ENCODE measurements at regions of chr10 and their contacts with region 1.

Region 1: GRCh38 chr10:97210543-97210961 is 24.8 kb upstream of the SLIT1 start:
- DNase-seq: peak; percentile 37
- ATAC-seq: peak; percentile 91
- H3K4me3 ChIP-seq: no peak overlapping the region
- H3K27ac ChIP-seq: no peak overlapping the region
- H3K4me1 ChIP-seq: peaks cover 3% of the 10 kb centered on the region
- H3K27me3 ChIP-seq: no peaks in the 10 kb centered on the region
- CTCF ChIP-seq: peak; percentile 88 to 94 (median 92)
- EP300 ChIP-seq: no peak
- POLR2A ChIP-seq: no peak
- RAD21 ChIP-seq: peak; percentile 94

Region 2: DNA sequence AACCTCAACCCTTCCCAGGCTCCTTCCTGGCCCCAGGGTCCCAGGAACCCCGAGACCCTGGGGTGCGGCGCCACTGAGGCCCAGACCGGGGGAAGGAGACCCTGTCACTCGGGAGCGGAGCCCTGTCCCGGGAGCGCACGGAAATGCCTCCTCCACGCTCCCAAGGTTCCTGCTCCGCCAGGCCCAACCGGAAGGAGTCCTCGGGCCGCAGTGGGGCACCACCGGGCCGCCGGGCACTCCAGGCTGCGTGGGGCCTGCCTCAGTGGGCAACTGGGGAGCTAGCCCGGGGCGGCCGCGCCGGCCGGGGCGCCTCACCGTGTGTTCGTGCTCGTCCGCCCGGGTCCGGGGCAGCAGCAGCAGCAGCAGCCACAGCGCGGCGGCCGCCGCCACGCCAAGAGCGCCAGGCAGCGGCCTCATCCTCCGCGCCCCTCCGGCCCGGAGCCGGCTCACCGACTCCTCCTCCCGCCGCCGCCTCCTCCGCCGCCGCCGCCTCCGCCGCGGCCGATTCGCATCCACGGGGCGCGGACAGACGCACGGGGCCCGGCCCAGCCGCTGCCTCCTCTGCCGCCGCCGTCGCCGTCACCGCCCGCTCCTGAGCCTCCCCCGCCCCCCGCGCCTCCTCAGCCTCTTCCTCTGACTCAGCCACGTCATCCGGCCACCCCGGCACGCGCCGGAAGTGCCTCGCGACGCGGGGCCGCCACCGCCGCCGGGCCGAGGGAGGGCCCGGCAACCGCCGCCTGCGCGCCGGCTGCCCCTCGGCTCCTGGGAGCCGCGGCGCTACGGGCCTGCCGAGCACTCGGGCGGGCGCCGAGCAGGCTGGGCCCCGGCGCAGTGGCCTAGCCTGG is 623.9 kb before region 1 on chr10 and contains the start of gene TM9SF3:
- CTCF ChIA-PET with region 1: no interaction called
- POLR2A ChIA-PET with region 1: no interaction called
- RAD21 ChIA-PET with region 1: no interaction called
- SMC1A ChIA-PET with region 1: no interaction called
- in situ Hi-C with region 1: no loop called
- intact Hi-C with region 1: no loop called
- DNase-seq: no peak
- ATAC-seq: peak; percentile 66
- H3K4me3 ChIP-seq: peak within 1 kb of the TSS; percentile 85
- H3K27ac ChIP-seq: peak within 1 kb of the TSS; percentile 96
- H3K4me1 ChIP-seq: peaks cover 22% of the 10 kb centered on the region
- H3K27me3 ChIP-seq: no peaks in the 10 kb centered on the region
- CTCF ChIP-seq: no peak
- EP300 ChIP-seq: no peak
- POLR2A ChIP-seq: peak; percentile 90
- RAD21 ChIP-seq: no peak
- polyA plus RNA-seq, gene TM9SF3: 17.1 to 20.4 TPM

Region 3: DNA sequence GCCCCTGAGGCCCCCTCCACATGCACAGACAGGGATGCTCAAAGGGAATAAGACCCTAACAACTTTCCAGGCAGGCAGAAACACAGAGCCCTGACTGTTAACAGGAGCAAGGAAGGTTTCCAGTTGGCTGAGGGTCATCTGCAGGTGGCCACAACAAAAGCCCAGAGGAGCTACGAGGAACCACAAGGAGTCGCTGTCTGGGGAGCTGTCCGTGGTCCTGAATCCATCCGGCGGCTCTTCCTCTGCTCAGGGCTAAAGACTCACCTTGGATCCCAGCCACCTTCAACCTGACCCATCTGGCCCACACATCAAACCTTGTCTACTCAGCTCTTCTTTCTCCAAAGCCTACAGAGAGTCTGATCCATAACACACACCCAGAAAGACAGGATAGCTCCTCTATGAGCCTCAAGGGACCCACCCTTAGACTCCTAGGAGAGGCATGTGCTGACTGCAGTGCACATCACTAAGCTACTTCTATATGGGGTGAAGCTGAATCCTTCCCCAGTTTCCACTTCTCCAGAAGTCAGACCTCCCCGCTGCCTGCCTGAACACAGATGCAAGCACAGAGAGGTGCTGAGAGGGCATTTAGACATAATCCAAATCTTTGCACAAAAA is 128.8 kb before region 1 on chr10:
- CTCF ChIA-PET with region 1: interaction called, 651 read pairs
- POLR2A ChIA-PET with region 1: no interaction called
- RAD21 ChIA-PET with region 1: interaction called, 12 read pairs
- SMC1A ChIA-PET with region 1: interaction called, 18 read pairs
- in situ Hi-C with region 1: no loop called
- intact Hi-C with region 1: loop called (anchors 2 kb)
- DNase-seq: no peak
- ATAC-seq: peak; percentile 93
- H3K4me3 ChIP-seq: no peak overlapping the region
- H3K27ac ChIP-seq: no peak overlapping the region
- H3K4me1 ChIP-seq: no peaks in the 10 kb centered on the region
- H3K27me3 ChIP-seq: no peaks in the 10 kb centered on the region; a peak in 1 of 4 replicates
- CTCF ChIP-seq: peak; percentile 88 to 90 (median 90)
- EP300 ChIP-seq: no peak
- POLR2A ChIP-seq: no peak
- RAD21 ChIP-seq: peak; percentile 68

Region 4: GRCh38 chr10:97138174-97138573 is 72.4 kb before region 1 on chr10:
- CTCF ChIA-PET with region 1: interaction called, 14 read pairs
- POLR2A ChIA-PET with region 1: no interaction called
- RAD21 ChIA-PET with region 1: interaction called, 3 read pairs
- SMC1A ChIA-PET with region 1: interaction called, 5 read pairs
- in situ Hi-C with region 1: no loop called
- intact Hi-C with region 1: no loop called
- DNase-seq: no peak
- ATAC-seq: 0 out of 3 replicates have a peak, but pooled peaks have one; percentile 20
- H3K4me3 ChIP-seq: no peak overlapping the region
- H3K27ac ChIP-seq: no peak overlapping the region
- H3K4me1 ChIP-seq: no peaks in the 10 kb centered on the region
- H3K27me3 ChIP-seq: peaks cover 0 to 5% of the 10 kb centered on the region in 2 experiments; a peak in 2 of 4 replicates
- CTCF ChIP-seq: peak; percentile 19 to 46 (median 24); a peak in 4 of 6 replicates
- EP300 ChIP-seq: no peak
- POLR2A ChIP-seq: no peak
- RAD21 ChIP-seq: no peak

Region 5: GRCh38 chr10:97196223-97197029 is 14.1 kb before region 1 on chr10:
- CTCF ChIA-PET with region 1: interaction called, 178 read pairs
- POLR2A ChIA-PET with region 1: no interaction called
- RAD21 ChIA-PET with region 1: interaction called, 7 read pairs
- SMC1A ChIA-PET with region 1: interaction called, 21 read pairs
- in situ Hi-C with region 1: no loop called
- intact Hi-C with region 1: no loop called
- DNase-seq: no peak
- ATAC-seq: peak; percentile 91
- H3K4me3 ChIP-seq: peak overlapping the region; percentile 79
- H3K27ac ChIP-seq: no peak overlapping the region
- H3K4me1 ChIP-seq: peaks cover 14% of the 10 kb centered on the region
- H3K27me3 ChIP-seq: no peaks in the 10 kb centered on the region; a peak in 1 of 4 replicates
- CTCF ChIP-seq: peak; percentile 76 to 94 (median 81)
- EP300 ChIP-seq: no peak
- POLR2A ChIP-seq: no peak
- RAD21 ChIP-seq: peak; percentile 63

Region 6: DNA sequence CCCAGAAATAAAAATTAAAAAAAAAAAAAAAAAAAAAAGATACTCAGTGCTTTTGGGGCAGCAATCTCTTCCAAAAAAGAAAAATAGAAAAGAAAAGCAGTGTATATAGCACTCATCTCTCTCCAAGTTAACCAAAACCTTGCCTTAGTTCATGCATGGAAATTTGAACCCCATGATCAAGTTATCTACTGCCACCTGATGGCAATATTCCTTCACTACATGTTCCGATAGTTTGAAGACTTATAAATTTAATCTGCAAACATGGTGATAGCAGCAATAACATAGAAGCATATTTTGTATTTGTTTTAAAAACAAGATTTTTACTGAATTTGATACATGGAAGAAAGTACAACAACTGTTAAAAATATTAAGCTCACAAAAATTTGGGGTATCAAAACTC is 23.8 kb after region 1 on chr10:
- CTCF ChIA-PET with region 1: interaction called, 52 read pairs
- POLR2A ChIA-PET with region 1: no interaction called
- RAD21 ChIA-PET with region 1: no interaction called
- SMC1A ChIA-PET with region 1: interaction called, 4 read pairs
- in situ Hi-C with region 1: no loop called
- intact Hi-C with region 1: no loop called
- DNase-seq: no peak
- ATAC-seq: peak; percentile 39; the same call in 2 of the 3 replicates
- H3K4me3 ChIP-seq: no peak overlapping the region
- H3K27ac ChIP-seq: no peak overlapping the region
- H3K4me1 ChIP-seq: no peaks in the 10 kb centered on the region
- H3K27me3 ChIP-seq: no peaks in the 10 kb centered on the region
- CTCF ChIP-seq: peak; percentile 36 to 54 (median 50); a peak in 5 of 6 replicates
- EP300 ChIP-seq: no peak
- POLR2A ChIP-seq: no peak
- RAD21 ChIP-seq: peak; percentile 66

Region 7: DNA sequence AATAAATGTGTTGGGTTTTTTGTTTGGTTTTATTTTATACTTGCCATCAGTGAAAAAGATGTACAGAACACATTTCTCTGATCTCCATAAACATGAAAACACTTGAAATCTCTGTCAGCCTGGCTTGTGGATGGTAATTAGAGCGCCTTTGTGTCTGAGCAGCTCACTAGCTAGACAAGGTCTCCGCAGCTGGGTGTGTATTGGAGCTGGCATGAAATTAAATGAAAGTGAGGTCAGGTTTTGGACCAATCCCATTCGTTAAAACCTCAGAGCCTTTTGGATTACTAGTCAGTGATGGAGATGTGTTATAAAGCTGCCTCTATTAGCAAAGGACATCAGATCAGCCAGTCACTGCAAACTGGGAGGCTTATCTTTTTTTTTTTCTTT is 111.2 kb after region 1 on chr10:
- CTCF ChIA-PET with region 1: no interaction called
- POLR2A ChIA-PET with region 1: no interaction called
- RAD21 ChIA-PET with region 1: no interaction called
- SMC1A ChIA-PET with region 1: no interaction called
- in situ Hi-C with region 1: no loop called
- intact Hi-C with region 1: no loop called
- DNase-seq: no peak
- ATAC-seq: no peak
- H3K4me3 ChIP-seq: no peak overlapping the region
- H3K27ac ChIP-seq: no peak overlapping the region
- H3K4me1 ChIP-seq: peaks cover 7% of the 10 kb centered on the region
- H3K27me3 ChIP-seq: peaks cover 12% of the 10 kb centered on the region in 2 experiments
- CTCF ChIP-seq: no peak
- EP300 ChIP-seq: no peak
- POLR2A ChIP-seq: no peak
- RAD21 ChIP-seq: no peak